HepG2 (cell line): ENCODE measurements at regions of chr4 and their contacts with region 1.

Region 1: GRCh38 chr4:138182838-138183426 is 59.2 kb downstream of the SLC7A11 start:
- DNase-seq: peak; percentile 56
- ATAC-seq: no peak
- H3K4me3 ChIP-seq: no peak overlapping the region
- H3K27ac ChIP-seq: no peak overlapping the region
- H3K4me1 ChIP-seq: no peaks in the 10 kb centered on the region
- H3K27me3 ChIP-seq: no peaks in the 10 kb centered on the region
- CTCF ChIP-seq: peak; percentile 67
- EP300 ChIP-seq: no peak
- POLR2A ChIP-seq: no peak
- RAD21 ChIP-seq: 0 out of 2 replicates have a peak, but pooled peaks have one; percentile 17

Region 2: GRCh38 chr4:137819964-137820383 is 363.0 kb before region 1 on chr4:
- CTCF ChIA-PET with region 1: no interaction called
- POLR2A ChIA-PET with region 1: no interaction called
- in situ Hi-C with region 1: loop called (anchors 10 kb)
- intact Hi-C with region 1: loop called (anchors 2 kb)
- DNase-seq: peak; percentile 45
- ATAC-seq: peak; percentile 97
- H3K4me3 ChIP-seq: no peak overlapping the region
- H3K27ac ChIP-seq: no peak overlapping the region
- H3K4me1 ChIP-seq: no peaks in the 10 kb centered on the region
- H3K27me3 ChIP-seq: no peaks in the 10 kb centered on the region
- CTCF ChIP-seq: peak; percentile 78
- EP300 ChIP-seq: no peak
- POLR2A ChIP-seq: no peak
- RAD21 ChIP-seq: peak; percentile 71

Region 3: DNA sequence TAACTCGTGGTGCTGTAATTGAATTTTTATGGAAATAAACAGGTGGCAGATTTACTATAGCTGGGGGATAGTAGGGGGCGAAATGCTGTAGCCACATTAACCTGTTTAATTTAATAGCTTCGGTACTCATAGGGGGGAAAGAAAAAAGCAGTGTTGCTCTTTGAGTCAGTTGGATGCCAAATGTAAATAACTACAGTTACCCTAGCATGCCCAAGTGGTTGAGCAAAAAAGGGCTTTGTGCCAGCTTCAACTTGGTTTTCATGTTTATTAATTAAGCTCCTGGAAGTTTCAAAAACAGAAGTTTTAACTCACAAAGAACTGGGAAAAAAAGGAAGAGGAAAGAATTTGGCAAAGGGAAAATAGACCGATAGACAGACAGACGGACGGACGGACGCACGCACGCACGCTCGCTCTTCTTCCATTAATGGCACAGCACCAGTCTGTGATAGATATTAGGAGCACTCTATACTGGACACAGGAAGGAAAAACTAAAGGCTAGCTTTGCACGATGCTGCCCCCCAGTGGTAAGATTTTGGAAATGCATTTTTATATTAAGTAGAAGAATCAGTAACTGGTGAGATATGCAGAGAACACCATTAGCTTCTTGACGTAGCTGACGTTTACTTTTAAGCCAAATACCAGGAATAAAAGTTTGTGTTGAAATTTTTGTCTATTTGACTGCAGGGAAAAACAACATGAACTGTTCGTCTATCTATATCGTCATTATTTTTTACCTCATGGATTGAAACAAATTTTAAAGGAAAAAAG is 92.6 kb before region 1 on chr4:
- CTCF ChIA-PET with region 1: no interaction called
- POLR2A ChIA-PET with region 1: no interaction called
- in situ Hi-C with region 1: no loop called
- intact Hi-C with region 1: loop called (anchors 2 kb)
- DNase-seq: peak; percentile 64
- ATAC-seq: peak; percentile 87
- H3K4me3 ChIP-seq: peak overlapping the region in 1 of 3 experiments; percentile 24; a peak in 1 of 6 replicates
- H3K27ac ChIP-seq: no peak overlapping the region
- H3K4me1 ChIP-seq: peaks cover 30% of the 10 kb centered on the region
- H3K27me3 ChIP-seq: no peaks in the 10 kb centered on the region
- CTCF ChIP-seq: peak; percentile 80
- EP300 ChIP-seq: no peak
- POLR2A ChIP-seq: no peak
- RAD21 ChIP-seq: 0 out of 2 replicates have a peak, but pooled peaks have one; percentile 45